ENCODE measurements at regions of chr10 and their contacts with region 1.

Region 1: GRCh38 chr10:74262856-74263255 is 111.8 kb downstream of the ADK start:
- DNase-seq: no peak
- ATAC-seq: no peak

Region 2: GRCh38 chr10:75019370-75019769 is 756.5 kb after region 1 on chr10:
- intact Hi-C with region 1: loop called (anchors 5 kb)
- DNase-seq: no peak
- ATAC-seq: no peak

Measured in Right ventricle myocardium inferior (tissue), 1 donor.